ENCODE measurements at regions of chr3 and their contacts with region 1.

Region 1: GRCh38 chr3:152268555-152269425 is at the start of gene MBNL1:
- DNase-seq: peak; percentile 81
- H3K4me3 Mint-ChIP-seq: peak within 1 kb of the TSS; percentile 90
- H3K27ac Mint-ChIP-seq: peak within 1 kb of the TSS; percentile 80
- H3K4me1 Mint-ChIP-seq: peaks cover 42% of the 10 kb centered on the region
- H3K27me3 Mint-ChIP-seq: no peaks in the 10 kb centered on the region
- CTCF ChIP-seq: no peak
- total RNA-seq, gene MBNL1: 114 and 139 TPM in 2 replicates

Region 2: GRCh38 chr3:152071924-152072323 is 196.9 kb before region 1 on chr3:
- CTCF ChIA-PET with region 1: interaction called, 5 read pairs
- POLR2A ChIA-PET with region 1: interaction called, 20 read pairs
- intact Hi-C with region 1: loop called (anchors 1 kb)
- DNase-seq: peak; percentile 69
- H3K4me3 Mint-ChIP-seq: no peak overlapping the region
- H3K27ac Mint-ChIP-seq: no peak overlapping the region
- H3K4me1 Mint-ChIP-seq: no peaks in the 10 kb centered on the region
- H3K27me3 Mint-ChIP-seq: no peaks in the 10 kb centered on the region
- CTCF ChIP-seq: peak; percentile 40

Region 3: GRCh38 chr3:152151216-152151876 is 117.4 kb before region 1 on chr3:
- CTCF ChIA-PET with region 1: interaction called, 4 read pairs
- POLR2A ChIA-PET with region 1: interaction called, 37 read pairs
- intact Hi-C with region 1: no loop called
- DNase-seq: peak; percentile 17
- H3K4me3 Mint-ChIP-seq: no peak overlapping the region
- H3K27ac Mint-ChIP-seq: peak overlapping the region; percentile 61
- H3K4me1 Mint-ChIP-seq: peaks cover 16% of the 10 kb centered on the region
- H3K27me3 Mint-ChIP-seq: no peaks in the 10 kb centered on the region
- CTCF ChIP-seq: no peak

Region 4: GRCh38 chr3:152291649-152292066 is 22.9 kb after region 1 on chr3:
- CTCF ChIA-PET with region 1: no interaction called
- POLR2A ChIA-PET with region 1: interaction called, 156 read pairs
- intact Hi-C with region 1: no loop called
- DNase-seq: no peak
- H3K4me3 Mint-ChIP-seq: no peak overlapping the region
- H3K27ac Mint-ChIP-seq: no peak overlapping the region
- H3K4me1 Mint-ChIP-seq: peaks cover 39% of the 10 kb centered on the region
- H3K27me3 Mint-ChIP-seq: no peaks in the 10 kb centered on the region
- CTCF ChIP-seq: no peak

Region 5: DNA sequence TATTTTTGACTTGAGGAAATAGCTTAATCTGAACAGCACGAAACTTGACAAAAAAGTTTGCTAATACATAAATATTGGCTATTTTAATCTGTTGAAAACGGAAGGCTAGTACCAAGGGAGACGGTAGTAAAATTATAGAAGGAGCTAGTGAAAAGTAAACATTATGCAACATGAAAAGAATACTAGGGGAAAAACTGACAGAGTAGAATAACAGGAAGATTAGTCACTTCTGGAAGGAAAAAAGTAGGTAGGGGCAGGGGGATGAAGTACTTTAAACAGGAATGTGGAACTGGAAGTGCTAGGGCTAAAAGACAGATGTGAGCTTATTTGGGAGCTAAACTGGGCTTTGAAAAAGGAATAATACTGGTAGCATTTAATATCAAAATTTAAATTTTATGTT is 60.1 kb after region 1 on chr3:
- CTCF ChIA-PET with region 1: no interaction called
- POLR2A ChIA-PET with region 1: interaction called, 18 read pairs
- intact Hi-C with region 1: no loop called
- DNase-seq: peak; percentile 83
- H3K4me3 Mint-ChIP-seq: peak overlapping the region; percentile 15
- H3K27ac Mint-ChIP-seq: peak overlapping the region; percentile 18
- H3K4me1 Mint-ChIP-seq: peaks cover 40% of the 10 kb centered on the region
- H3K27me3 Mint-ChIP-seq: no peaks in the 10 kb centered on the region
- CTCF ChIP-seq: no peak

Region 6: GRCh38 chr3:152405915-152406802 is 137.4 kb after region 1 on chr3:
- CTCF ChIA-PET with region 1: no interaction called
- POLR2A ChIA-PET with region 1: interaction called, 11 read pairs
- intact Hi-C with region 1: loop called (anchors 10 kb)
- DNase-seq: peak; percentile 95
- H3K4me3 Mint-ChIP-seq: peak overlapping the region; percentile 63
- H3K27ac Mint-ChIP-seq: peak overlapping the region; percentile 23
- H3K4me1 Mint-ChIP-seq: peaks cover 31% of the 10 kb centered on the region
- H3K27me3 Mint-ChIP-seq: no peaks in the 10 kb centered on the region
- CTCF ChIP-seq: no peak